ENCODE measurements at regions of chr22 and their contacts with region 1.

Region 1: GRCh38 chr22:28783786-28784671 is 11.5 kb downstream of the CCDC117 start:
- DNase-seq: no peak
- ATAC-seq: no peak
- H3K4me3 Mint-ChIP-seq: no peak overlapping the region
- H3K27ac Mint-ChIP-seq: no peak overlapping the region
- H3K4me1 Mint-ChIP-seq: peaks cover 11% of the 10 kb centered on the region
- H3K27me3 Mint-ChIP-seq: no peaks in the 10 kb centered on the region

Region 2: DNA sequence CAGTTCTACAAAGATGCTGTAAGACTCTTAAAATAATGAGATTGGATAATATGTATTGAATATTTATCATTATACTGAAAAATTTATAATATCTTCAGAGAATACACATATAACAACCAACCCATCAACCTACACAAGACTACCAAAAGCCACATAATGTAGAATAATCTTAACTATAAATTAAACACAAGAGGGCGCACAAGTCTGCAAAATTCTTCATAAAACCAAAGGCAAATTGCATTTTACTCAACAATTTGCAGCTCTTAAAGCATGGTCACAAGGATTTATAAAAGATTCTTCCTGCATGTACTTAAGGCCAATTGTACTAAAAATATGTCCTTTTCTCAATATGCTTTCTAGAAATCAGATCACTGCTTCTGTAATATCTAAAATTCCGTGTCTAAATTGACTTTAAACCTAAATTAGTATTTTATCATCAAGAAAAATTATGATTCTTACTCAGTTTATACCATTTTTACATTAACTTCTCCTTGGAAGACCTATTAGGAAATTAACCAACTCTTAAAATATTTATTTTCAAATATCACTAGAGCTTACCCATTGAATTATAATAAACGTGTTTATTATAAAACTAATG is 183.4 kb before region 1 on chr22:
- CTCF ChIA-PET with region 1: interaction called, 10 read pairs
- DNase-seq: no peak
- ATAC-seq: no peak
- H3K4me3 Mint-ChIP-seq: no peak overlapping the region
- H3K27ac Mint-ChIP-seq: no peak overlapping the region
- H3K4me1 Mint-ChIP-seq: no peaks in the 10 kb centered on the region
- H3K27me3 Mint-ChIP-seq: peaks cover 52% of the 10 kb centered on the region

Region 3: DNA sequence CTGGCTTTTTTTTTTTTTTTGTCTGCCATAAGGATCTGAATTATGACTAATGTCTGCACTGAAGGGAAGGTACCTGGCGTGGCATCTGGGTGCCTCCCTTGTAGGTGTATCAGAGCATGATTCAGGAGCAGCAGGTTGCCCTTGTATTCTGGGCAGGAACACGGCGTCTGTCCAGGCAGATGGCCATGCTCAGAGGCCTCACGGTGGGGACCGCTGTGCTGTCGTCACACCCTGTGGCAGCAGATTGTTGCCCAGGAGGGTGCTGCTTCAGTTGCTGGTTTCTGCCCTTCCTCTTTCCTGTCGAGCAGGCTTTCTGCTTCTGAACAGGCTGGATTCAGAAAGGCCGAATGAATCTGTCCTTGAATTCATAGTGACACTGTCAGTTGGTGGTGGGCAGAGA is 110.3 kb after region 1 on chr22:
- CTCF ChIA-PET with region 1: no interaction called
- DNase-seq: no peak
- ATAC-seq: no peak
- H3K4me3 Mint-ChIP-seq: no peak overlapping the region
- H3K27ac Mint-ChIP-seq: no peak overlapping the region
- H3K4me1 Mint-ChIP-seq: peaks cover 10% of the 10 kb centered on the region
- H3K27me3 Mint-ChIP-seq: peaks cover 39% of the 10 kb centered on the region